ENCODE measurements at regions of chr4 and their contacts with region 1.

Region 1: DNA sequence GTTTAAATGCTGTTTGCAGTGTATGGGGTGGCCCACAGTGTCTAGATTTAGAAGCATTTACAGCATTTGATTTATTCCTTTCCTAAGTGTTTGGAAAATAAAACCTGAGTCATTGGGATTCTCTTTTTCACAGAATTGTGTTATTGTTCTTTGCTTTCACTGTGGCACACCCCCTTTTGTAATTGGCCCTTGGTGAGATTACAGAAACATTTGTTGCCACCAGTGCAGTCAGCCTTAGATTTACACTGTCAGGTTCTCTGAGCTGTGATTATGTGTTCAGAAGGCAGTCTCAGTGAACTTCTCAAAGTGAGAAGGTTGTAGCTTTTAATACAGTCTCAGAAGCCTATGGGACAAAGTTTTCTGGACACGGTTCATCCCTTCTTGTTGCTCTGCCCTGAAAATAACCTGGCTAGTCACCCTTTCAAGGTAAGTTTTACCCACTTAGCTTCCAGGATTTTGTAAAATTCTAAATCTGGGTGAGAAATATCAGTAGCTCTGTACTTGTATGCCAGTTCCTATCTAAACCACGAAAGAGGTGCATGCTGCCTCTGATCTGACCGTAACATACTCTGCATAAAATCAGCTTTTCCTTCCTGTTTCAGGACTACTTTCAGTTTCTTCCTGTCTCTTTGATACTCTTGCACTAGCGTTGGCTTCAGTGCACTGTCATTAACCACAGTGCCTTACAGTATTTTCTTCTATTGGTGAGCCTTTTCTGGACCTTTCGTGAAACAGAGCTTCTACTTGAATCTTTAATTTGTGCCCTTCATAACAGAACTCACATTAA is 12.6 kb downstream of the RUFY3 start:
- DNase-seq: peak in 7 of 9 experiments; percentile 16 to 84 (median 45)
- ATAC-seq: peak; percentile 88
- H3K4me3 ChIP-seq: peak overlapping the region; percentile 40
- H3K4me3 Mint-ChIP-seq: peak overlapping the region; percentile 72
- H3K27ac ChIP-seq: peak overlapping the region; percentile 55 to 77
- H3K27ac Mint-ChIP-seq: peak overlapping the region; percentile 81
- H3K4me1 ChIP-seq: peaks cover 45% of the 10 kb centered on the region
- H3K4me1 Mint-ChIP-seq: peaks cover 45% of the 10 kb centered on the region
- H3K27me3 ChIP-seq: no peaks in the 10 kb centered on the region
- H3K27me3 Mint-ChIP-seq: no peaks in the 10 kb centered on the region
- CTCF ChIP-seq: no peak

Region 2: DNA sequence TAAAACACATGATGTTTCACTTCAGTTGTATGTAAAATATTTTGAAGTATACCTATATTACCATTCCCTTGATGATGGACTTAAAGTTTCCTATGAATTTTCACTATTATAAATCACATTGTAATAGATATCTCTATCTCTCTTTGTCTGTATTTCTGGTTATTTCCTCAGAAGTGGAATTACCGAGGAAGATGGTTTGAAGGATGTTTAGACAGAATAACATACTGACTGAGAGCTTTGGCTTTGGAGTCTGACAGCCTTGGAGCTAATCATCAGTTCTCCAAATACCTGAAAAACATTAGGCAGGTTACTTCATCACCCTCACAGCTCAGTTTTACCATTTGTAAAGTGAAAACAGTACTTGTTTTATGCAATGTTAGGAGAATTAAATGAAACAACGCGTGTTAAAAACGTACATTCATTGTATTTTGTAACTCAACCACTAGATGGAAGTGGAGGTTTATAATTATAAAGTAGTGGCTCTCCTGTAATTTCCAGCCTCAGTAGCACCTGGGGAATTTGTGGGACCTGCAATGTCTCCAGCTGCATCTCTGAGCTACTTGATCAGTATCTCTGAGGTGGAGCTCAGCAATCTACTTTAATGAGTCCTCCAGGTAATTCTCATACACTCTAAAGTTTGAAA is 82.4 kb before region 1 on chr4:
- CTCF ChIA-PET with region 1: interaction called, 19 read pairs
- POLR2A ChIA-PET with region 1: no interaction called
- intact Hi-C with region 1: loop called (anchors 1 to 2 kb)
- DNase-seq: peak in 2 of 9 experiments; percentile 38 to 54
- ATAC-seq: no peak
- H3K4me3 ChIP-seq: no peak overlapping the region
- H3K4me3 Mint-ChIP-seq: no peak overlapping the region
- H3K27ac ChIP-seq: no peak overlapping the region
- H3K27ac Mint-ChIP-seq: no peak overlapping the region
- H3K4me1 ChIP-seq: no peaks in the 10 kb centered on the region
- H3K4me1 Mint-ChIP-seq: peaks cover 6% of the 10 kb centered on the region
- H3K27me3 ChIP-seq: peaks cover 0 to 4% of the 10 kb centered on the region in 2 experiments
- H3K27me3 Mint-ChIP-seq: no peaks in the 10 kb centered on the region
- CTCF ChIP-seq: peak; percentile 68

Region 3: GRCh38 chr4:70704331-70705145 is 29.8 kb before region 1 on chr4:
- CTCF ChIA-PET with region 1: interaction called, 74 read pairs
- POLR2A ChIA-PET with region 1: interaction called, 85 read pairs
- intact Hi-C with region 1: loop called (anchors 1 to 2 kb)
- DNase-seq: peak; percentile 32 to 84 (median 62)
- ATAC-seq: peak; percentile 45
- H3K4me3 ChIP-seq: peak overlapping the region; percentile 53 to 64
- H3K4me3 Mint-ChIP-seq: peak overlapping the region; percentile 93
- H3K27ac ChIP-seq: peak overlapping the region; percentile 59 to 86
- H3K27ac Mint-ChIP-seq: peak overlapping the region; percentile 88
- H3K4me1 ChIP-seq: peaks cover 29% of the 10 kb centered on the region
- H3K4me1 Mint-ChIP-seq: peaks cover 28% of the 10 kb centered on the region
- H3K27me3 ChIP-seq: no peaks in the 10 kb centered on the region
- H3K27me3 Mint-ChIP-seq: no peaks in the 10 kb centered on the region
- CTCF ChIP-seq: no peak

Region 4: DNA sequence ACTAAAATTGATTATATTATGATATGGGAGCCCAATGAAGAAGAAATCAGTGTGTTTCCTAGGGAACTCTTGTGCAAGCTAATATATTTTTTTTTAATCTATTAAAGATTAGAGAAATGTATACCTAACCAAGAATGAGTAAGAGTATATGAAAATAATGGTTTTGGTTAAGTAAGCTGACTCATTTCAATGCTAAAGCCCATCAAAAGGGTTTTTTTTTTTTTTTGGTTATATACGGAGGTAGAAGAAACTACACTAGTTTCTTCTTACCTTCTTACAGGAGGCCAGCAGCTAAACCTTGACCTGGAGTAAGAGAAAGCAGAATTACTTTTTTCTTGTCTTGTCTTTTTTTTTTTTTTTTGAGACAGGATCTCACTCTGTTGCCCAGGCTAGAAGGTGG is 15.0 kb after region 1 on chr4:
- CTCF ChIA-PET with region 1: interaction called, 15 read pairs
- POLR2A ChIA-PET with region 1: interaction called, 3 read pairs
- intact Hi-C with region 1: loop called in 1 of 2 experiments (anchors 2 kb)
- DNase-seq: no peak
- ATAC-seq: no peak
- H3K4me3 ChIP-seq: no peak overlapping the region
- H3K4me3 Mint-ChIP-seq: no peak overlapping the region
- H3K27ac ChIP-seq: no peak overlapping the region
- H3K27ac Mint-ChIP-seq: no peak overlapping the region
- H3K4me1 ChIP-seq: no peaks in the 10 kb centered on the region
- H3K4me1 Mint-ChIP-seq: peaks cover 16% of the 10 kb centered on the region
- H3K27me3 ChIP-seq: no peaks in the 10 kb centered on the region
- H3K27me3 Mint-ChIP-seq: no peaks in the 10 kb centered on the region
- CTCF ChIP-seq: no peak

Region 5: DNA sequence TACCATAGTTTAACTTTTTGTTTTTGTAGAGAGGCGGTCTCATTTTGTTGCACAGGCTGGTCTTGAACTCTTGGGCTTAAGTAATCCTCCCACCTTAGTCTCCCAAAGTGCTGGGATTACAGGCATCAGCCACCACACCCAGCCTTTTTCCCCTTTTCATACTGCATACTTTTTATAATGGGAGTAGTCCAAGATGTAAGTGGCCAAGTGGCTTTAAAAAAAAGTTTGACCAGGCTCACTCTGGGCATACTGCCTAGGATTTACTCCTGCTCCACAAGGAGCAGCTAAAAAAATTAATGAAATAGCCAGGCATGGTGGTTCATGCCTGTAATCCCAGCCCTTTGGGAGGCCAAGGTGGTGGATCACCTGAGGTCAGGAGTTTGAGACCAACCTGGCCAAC is 99.3 kb after region 1 on chr4:
- CTCF ChIA-PET with region 1: interaction called, 4 read pairs
- POLR2A ChIA-PET with region 1: interaction called, 16 read pairs
- intact Hi-C with region 1: loop called in 1 of 2 experiments (anchors 5 kb)
- DNase-seq: no peak
- ATAC-seq: no peak
- H3K4me3 ChIP-seq: no peak overlapping the region
- H3K4me3 Mint-ChIP-seq: no peak overlapping the region
- H3K27ac ChIP-seq: no peak overlapping the region
- H3K27ac Mint-ChIP-seq: no peak overlapping the region
- H3K4me1 ChIP-seq: peaks cover 29% of the 10 kb centered on the region
- H3K4me1 Mint-ChIP-seq: peaks cover 36% of the 10 kb centered on the region
- H3K27me3 ChIP-seq: no peaks in the 10 kb centered on the region
- H3K27me3 Mint-ChIP-seq: no peaks in the 10 kb centered on the region
- CTCF ChIP-seq: no peak

Region 6: GRCh38 chr4:70863099-70863790 is 128.9 kb after region 1 on chr4:
- CTCF ChIA-PET with region 1: no interaction called
- POLR2A ChIA-PET with region 1: no interaction called
- intact Hi-C with region 1: no loop called
- DNase-seq: peak in 1 of 9 experiments; percentile 13
- ATAC-seq: no peak
- H3K4me3 ChIP-seq: no peak overlapping the region
- H3K4me3 Mint-ChIP-seq: no peak overlapping the region
- H3K27ac ChIP-seq: no peak overlapping the region
- H3K27ac Mint-ChIP-seq: no peak overlapping the region
- H3K4me1 ChIP-seq: no peaks in the 10 kb centered on the region
- H3K4me1 Mint-ChIP-seq: peaks cover 9% of the 10 kb centered on the region
- H3K27me3 ChIP-seq: no peaks in the 10 kb centered on the region
- H3K27me3 Mint-ChIP-seq: no peaks in the 10 kb centered on the region
- CTCF ChIP-seq: no peak

Region 7: GRCh38 chr4:70901984-70902576 is 167.7 kb after region 1 on chr4 and contains the start of gene MOB1B:
- CTCF ChIA-PET with region 1: interaction called, 19 read pairs
- POLR2A ChIA-PET with region 1: interaction called, 9 read pairs
- intact Hi-C with region 1: loop called in 1 of 2 experiments (anchors 2 kb)
- DNase-seq: peak; percentile 62 to 90 (median 84)
- ATAC-seq: peak; percentile 95
- H3K4me3 ChIP-seq: peak within 1 kb of the TSS; percentile 86 to 88
- H3K4me3 Mint-ChIP-seq: peak within 1 kb of the TSS; percentile 99
- H3K27ac ChIP-seq: peak within 1 kb of the TSS; percentile 40 to 46
- H3K27ac Mint-ChIP-seq: peak within 1 kb of the TSS; percentile 86
- H3K4me1 ChIP-seq: peaks cover 19% of the 10 kb centered on the region
- H3K4me1 Mint-ChIP-seq: peaks cover 36% of the 10 kb centered on the region
- H3K27me3 ChIP-seq: no peaks in the 10 kb centered on the region
- H3K27me3 Mint-ChIP-seq: no peaks in the 10 kb centered on the region
- CTCF ChIP-seq: peak; percentile 39
- total RNA-seq, gene MOB1B: 9.7 to 11.1 TPM